ENCODE measurements at regions of chr4 and their contacts with region 1.

Region 1: GRCh38 chr4:81040012-81040659 is 9.6 kb downstream of the BMP3 start:
- DNase-seq: no peak
- ATAC-seq: peak; percentile 57
- H3K4me3 ChIP-seq: no peak overlapping the region
- H3K27ac ChIP-seq: no peak overlapping the region
- H3K4me1 ChIP-seq: no peaks in the 10 kb centered on the region
- H3K27me3 ChIP-seq: peaks cover 45% of the 10 kb centered on the region
- CTCF ChIP-seq: peak; percentile 53 to 76 (median 65); a peak in 5 of 6 replicates
- POLR2A ChIP-seq: no peak
- RAD21 ChIP-seq: peak; percentile 71

Region 2: DNA sequence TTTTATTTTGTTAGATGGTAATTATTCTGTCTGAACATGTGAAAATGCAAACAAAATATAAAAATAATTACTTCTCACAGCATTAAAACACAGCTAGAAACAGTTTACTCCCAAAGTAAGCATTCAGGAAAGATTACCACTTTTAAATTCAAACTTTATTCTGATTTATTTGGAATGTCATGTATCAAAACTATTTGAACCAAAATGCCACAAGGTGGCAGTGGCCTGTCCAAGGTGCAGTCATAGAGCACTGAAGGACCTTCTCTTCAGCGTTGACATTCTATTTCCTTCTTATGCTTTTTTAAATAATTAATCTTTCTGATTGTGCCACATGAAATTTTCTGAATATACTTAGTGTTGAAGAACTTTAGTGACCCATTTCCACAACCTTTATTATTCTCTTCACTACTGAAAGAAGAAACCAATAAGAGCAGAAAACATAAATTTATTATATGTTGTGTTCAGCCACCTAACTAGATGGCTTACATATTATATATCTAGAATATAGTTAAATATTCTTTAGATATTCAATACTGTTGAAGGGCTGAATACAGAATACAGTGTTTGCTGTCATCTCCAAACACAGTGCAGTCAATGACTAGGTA is 421.0 kb before region 1 on chr4:
- CTCF ChIA-PET with region 1: no interaction called
- POLR2A ChIA-PET with region 1: no interaction called
- RAD21 ChIA-PET with region 1: no interaction called
- intact Hi-C with region 1: loop called (anchors 2 kb)
- DNase-seq: peak; percentile 15
- ATAC-seq: peak; percentile 50; the same call in 1 of the 2 replicates
- H3K4me3 ChIP-seq: no peak overlapping the region
- H3K27ac ChIP-seq: no peak overlapping the region
- H3K4me1 ChIP-seq: no peaks in the 10 kb centered on the region
- H3K27me3 ChIP-seq: no peaks in the 10 kb centered on the region
- CTCF ChIP-seq: peak in 2 of 3 experiments; percentile 44 to 58; a peak in 3 of 6 replicates
- POLR2A ChIP-seq: no peak
- RAD21 ChIP-seq: peak; percentile 36; the same call in 1 of the 2 replicates

Measured in HCT116 (cell line).